PC-3 (cell line): ENCODE measurements at regions of chr12 and their contacts with region 1.

Region 1: GRCh38 chr12:40054554-40055227 is 51.2 kb downstream of the SLC2A13 start:
- DNase-seq: peak; percentile 61
- ATAC-seq: peak; percentile 99
- H3K4me3 ChIP-seq: no peak overlapping the region
- H3K27ac ChIP-seq: no peak overlapping the region
- H3K4me1 ChIP-seq: no peaks in the 10 kb centered on the region
- H3K27me3 ChIP-seq: no peaks in the 10 kb centered on the region
- CTCF ChIP-seq: no peak

Region 2: DNA sequence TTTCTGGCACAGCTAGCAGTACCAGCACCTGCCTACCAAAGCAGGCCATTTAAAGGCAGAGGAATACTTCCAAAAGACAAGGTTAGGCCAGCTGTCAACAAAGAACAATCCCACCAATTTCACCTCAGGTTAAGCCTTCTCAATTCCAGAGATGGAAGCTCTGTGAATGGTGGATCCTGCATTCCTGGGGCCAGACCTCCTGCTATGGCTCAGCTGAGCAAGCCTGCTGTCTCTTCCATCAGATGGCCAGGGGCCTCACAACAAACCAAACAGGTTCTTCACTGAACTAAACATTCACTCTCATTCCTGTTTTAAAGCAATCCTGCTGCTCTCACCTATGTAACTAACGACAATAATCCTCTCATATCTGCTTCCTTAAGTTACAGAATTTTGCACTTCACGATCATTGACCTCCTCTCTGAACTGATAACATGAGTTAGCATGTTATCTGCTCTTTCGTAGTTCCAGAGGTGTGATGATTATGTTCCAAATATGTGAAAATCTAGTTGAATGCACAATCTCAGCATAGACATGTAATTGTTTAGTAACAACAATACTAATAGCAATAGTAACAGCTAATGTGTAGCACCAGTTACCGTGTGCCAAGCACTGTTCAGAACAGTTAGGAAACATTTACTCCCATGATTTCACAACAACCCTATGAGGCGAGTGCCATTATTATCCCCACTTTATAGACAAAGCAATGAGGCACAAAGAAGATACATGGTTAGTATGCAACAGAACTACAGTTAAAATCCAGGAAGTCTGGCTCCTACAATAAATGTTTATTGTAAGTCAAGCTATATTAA is 22.1 kb before region 1 on chr12:
- CTCF ChIA-PET with region 1: no interaction called
- POLR2A ChIA-PET with region 1: no interaction called
- intact Hi-C with region 1: loop called (anchors 2 kb)
- DNase-seq: no peak
- ATAC-seq: no peak
- H3K4me3 ChIP-seq: no peak overlapping the region
- H3K27ac ChIP-seq: no peak overlapping the region
- H3K4me1 ChIP-seq: no peaks in the 10 kb centered on the region
- H3K27me3 ChIP-seq: no peaks in the 10 kb centered on the region
- CTCF ChIP-seq: no peak

Region 3: DNA sequence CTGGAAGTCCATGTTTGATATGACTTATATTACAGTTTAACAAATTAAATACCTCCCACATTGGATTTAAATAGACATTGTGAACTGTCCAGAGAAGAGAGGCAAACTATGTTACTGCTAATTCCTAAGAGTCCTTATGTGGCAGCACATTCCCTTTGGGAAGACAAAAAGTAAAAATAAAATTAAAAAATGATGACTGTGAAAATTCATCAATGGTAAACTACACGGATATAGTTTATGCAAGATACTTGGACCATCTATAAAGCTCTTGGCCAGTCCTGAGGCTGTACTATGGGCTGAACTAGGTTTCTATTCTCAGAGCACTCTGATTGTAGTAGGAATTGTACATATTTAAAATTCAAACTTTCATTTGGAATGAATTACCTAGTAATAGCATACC is 376.5 kb after region 1 on chr12:
- CTCF ChIA-PET with region 1: no interaction called
- POLR2A ChIA-PET with region 1: no interaction called
- intact Hi-C with region 1: no loop called
- DNase-seq: no peak
- ATAC-seq: no peak
- H3K4me3 ChIP-seq: no peak overlapping the region
- H3K27ac ChIP-seq: no peak overlapping the region
- H3K4me1 ChIP-seq: no peaks in the 10 kb centered on the region
- H3K27me3 ChIP-seq: peaks cover 29% of the 10 kb centered on the region
- CTCF ChIP-seq: no peak